Posterior vena cava (tissue), 2 donors: ENCODE measurements at regions of chr17 and their contacts with region 1.

Region 1: DNA sequence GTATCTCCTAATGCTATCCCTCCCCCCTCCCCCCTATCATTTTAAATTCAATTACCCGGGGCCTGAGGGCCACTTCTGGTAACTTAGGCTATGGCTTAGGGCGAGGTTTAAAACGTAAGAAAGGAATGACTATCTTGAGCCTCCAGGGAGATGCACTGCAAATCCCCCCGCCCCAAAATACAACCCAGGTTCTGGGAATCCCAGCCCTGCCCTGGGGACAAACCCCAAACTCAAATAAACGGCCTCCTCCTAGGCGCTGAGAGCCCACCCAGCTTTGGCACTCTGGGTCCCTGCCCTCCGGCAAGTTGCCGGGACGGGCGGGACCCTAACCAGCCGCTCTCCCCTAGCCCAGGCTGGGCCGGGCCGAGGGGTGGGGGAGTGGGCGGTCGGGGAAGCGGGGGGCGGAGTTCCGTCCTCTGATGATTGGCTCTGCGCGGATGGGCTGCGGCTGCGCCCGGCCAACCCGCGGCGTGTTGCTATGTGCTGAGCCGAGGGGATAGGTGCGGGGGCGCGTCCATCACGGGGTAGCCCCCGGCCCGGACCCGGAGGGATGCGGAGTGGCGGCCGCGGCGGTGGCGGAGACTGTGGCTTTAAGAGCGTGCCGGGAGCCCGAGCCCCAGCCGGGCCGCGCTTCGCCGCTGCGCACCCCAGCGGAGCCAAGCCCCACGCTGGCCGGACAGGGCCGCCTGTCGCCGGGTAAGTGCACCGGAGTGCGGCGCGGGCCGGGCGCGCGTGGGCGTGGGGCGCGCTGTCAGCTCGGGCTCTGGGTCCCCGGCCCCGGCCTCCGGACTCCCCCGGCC is at the start of gene YPEL2:
- DNase-seq: peak; percentile 99
- total RNA-seq, gene YPEL2: 25.8 to 40.3 TPM

Region 2: GRCh38 chr17:59372138-59372857 is 41.0 kb after region 1 on chr17:
- intact Hi-C with region 1: loop called (anchors 5 kb)
- DNase-seq: no peak

Region 3: DNA sequence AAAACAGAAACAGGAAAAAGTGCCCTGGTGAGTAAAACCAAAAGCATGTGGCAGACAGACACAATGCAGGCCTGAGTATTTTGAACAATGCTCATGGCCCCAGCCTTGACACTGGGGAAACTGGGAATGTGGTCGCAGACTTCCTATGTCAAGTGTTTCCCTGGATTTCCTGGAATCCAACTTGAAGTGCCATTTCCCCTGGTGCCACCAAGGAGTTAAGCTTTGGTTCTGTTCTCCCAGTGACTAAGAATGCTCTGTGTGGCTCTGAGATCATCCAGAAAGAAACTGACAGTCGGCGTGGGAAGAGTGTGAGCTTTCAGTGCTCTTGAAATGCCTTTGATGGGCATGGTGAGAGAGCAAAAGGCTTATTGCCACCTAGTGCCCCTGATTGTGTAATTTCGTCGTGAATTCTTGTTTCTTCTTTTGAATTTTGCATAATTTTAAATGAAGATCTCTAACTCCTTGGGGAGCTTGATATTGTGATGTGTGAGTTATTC is 96.1 kb after region 1 on chr17:
- intact Hi-C with region 1: loop called in 1 of 2 experiments (anchors 5 kb)
- DNase-seq: no peak

Region 4: DNA sequence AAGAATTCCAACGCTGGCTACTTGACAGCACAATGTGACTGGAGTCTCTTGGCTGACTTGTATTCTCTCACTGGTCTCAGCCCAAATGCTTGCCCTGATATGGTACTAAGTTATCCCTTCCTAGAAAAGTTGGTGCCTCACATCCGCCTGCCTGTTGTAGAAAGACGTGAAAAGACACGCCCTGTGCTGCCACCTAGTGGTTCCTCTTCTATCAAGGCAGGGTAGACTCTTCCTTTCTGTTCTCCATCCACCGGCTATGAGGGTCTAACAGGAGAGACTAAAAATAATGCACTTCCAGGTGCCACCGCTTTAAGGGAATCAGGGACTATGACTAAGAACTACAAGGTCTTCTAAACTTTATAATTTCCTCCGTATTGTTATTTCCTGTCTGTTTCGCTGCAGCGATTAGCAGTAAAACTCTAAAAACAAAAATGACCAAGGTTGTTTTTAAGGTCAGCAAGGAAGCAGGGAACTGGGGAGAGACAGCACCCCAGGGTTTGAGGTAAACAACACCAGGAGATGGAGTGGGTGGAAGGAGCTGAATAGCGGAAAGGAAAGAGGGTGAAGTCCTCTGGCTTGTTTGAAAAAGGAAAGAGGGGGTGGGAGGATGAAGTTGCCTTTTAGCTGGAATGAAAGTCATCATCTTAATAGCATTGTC is 109.6 kb after region 1 on chr17:
- intact Hi-C with region 1: loop called (anchors 2 to 5 kb)
- DNase-seq: peak; percentile 94